B cell (primary cell): ENCODE measurements at regions of chr19 and their contacts with region 1.

Region 1: GRCh38 chr19:20039203-20039723 is at the start of gene ZNF682:
- DNase-seq: peak; percentile 96
- ATAC-seq: peak; percentile 100
- H3K4me3 ChIP-seq: peak within 1 kb of the TSS; percentile 30 to 91 (median 83)
- H3K4me3 Mint-ChIP-seq: peak within 1 kb of the TSS; percentile 99
- H3K27ac ChIP-seq: peak within 1 kb of the TSS; percentile 70 to 72
- H3K27ac Mint-ChIP-seq: peak within 1 kb of the TSS; percentile 97
- H3K4me1 ChIP-seq: peaks cover 0 to 9% of the 10 kb centered on the region in 2 donors
- H3K4me1 Mint-ChIP-seq: peaks cover 15% of the 10 kb centered on the region
- H3K27me3 ChIP-seq: peaks cover 0 to 5% (median 0%) of the 10 kb centered on the region in 4 experiments
- H3K27me3 Mint-ChIP-seq: no peaks in the 10 kb centered on the region
- CTCF ChIP-seq: no peak
- total RNA-seq, gene ZNF682: 11.3 and 16.0 TPM in 2 replicates

Region 2: GRCh38 chr19:19865739-19866481 is 173.4 kb before region 1 on chr19 and contains the start of gene ZNF253:
- CTCF ChIA-PET with region 1: interaction called, 3 read pairs
- POLR2A ChIA-PET with region 1: no interaction called
- intact Hi-C with region 1: loop called (anchors 10 kb)
- DNase-seq: peak; percentile 94
- ATAC-seq: peak; percentile 87
- H3K4me3 ChIP-seq: peak within 1 kb of the TSS; percentile 78 to 97 (median 93)
- H3K4me3 Mint-ChIP-seq: peak within 1 kb of the TSS; percentile 100
- H3K27ac ChIP-seq: peak within 1 kb of the TSS; percentile 88 to 91
- H3K27ac Mint-ChIP-seq: peak within 1 kb of the TSS; percentile 98
- H3K4me1 ChIP-seq: peaks cover 15 to 19% of the 10 kb centered on the region in 2 donors
- H3K4me1 Mint-ChIP-seq: peaks cover 35% of the 10 kb centered on the region
- H3K27me3 ChIP-seq: no peaks in the 10 kb centered on the region
- H3K27me3 Mint-ChIP-seq: no peaks in the 10 kb centered on the region
- CTCF ChIP-seq: no peak
- total RNA-seq, gene ZNF253: 28.6 and 33.7 TPM in 2 replicates

Region 3: DNA sequence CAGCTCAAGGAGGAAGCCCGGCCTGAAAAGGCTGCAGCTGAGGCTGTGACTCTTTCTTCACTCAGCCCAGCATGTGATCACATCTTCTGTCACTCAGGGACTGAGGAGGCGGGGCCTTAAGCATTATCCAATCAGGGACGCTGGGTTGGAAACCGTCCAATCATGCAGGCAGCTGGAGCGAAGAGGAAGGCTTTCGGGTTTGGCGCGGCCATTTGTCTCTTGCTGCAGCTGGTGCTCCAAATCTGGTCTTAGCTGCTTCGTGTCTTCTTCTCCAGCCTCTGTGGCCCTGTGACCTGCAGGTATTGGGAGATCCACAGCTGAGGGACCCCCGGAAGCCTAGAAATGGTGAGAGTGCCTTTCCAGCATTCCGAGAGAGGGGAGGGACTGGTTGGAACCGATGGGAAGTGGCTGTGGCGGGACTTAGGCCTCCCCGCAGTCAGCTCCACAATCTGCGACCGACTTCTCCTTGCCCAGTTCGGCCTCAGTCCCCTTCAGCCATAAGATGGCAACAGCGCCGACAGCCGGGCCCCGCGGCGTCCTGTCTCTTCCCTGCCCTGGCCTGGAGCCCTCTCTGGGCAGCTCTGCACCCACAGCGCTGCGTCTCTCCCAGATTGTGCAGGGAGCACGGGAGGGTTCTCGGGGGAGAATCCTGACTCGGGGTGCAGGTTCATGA is 38.7 kb after region 1 on chr19 and contains the start of gene ZNF90:
- CTCF ChIA-PET with region 1: no interaction called
- POLR2A ChIA-PET with region 1: no interaction called
- intact Hi-C with region 1: loop called (anchors 1 kb)
- DNase-seq: peak; percentile 93
- ATAC-seq: peak; percentile 99
- H3K4me3 ChIP-seq: peak within 1 kb of the TSS; percentile 60 to 78 (median 68)
- H3K4me3 Mint-ChIP-seq: peak within 1 kb of the TSS; percentile 95
- H3K27ac ChIP-seq: peak within 1 kb of the TSS in 1 of 2 donors; percentile 9
- H3K27ac Mint-ChIP-seq: peak within 1 kb of the TSS; percentile 79
- H3K4me1 ChIP-seq: peaks cover 10 to 14% of the 10 kb centered on the region in 2 donors
- H3K4me1 Mint-ChIP-seq: peaks cover 25% of the 10 kb centered on the region
- H3K27me3 ChIP-seq: no peaks in the 10 kb centered on the region
- H3K27me3 Mint-ChIP-seq: no peaks in the 10 kb centered on the region
- CTCF ChIP-seq: no peak
- total RNA-seq, gene ZNF90: 14.6 and 15.8 TPM in 2 replicates

Region 4: DNA sequence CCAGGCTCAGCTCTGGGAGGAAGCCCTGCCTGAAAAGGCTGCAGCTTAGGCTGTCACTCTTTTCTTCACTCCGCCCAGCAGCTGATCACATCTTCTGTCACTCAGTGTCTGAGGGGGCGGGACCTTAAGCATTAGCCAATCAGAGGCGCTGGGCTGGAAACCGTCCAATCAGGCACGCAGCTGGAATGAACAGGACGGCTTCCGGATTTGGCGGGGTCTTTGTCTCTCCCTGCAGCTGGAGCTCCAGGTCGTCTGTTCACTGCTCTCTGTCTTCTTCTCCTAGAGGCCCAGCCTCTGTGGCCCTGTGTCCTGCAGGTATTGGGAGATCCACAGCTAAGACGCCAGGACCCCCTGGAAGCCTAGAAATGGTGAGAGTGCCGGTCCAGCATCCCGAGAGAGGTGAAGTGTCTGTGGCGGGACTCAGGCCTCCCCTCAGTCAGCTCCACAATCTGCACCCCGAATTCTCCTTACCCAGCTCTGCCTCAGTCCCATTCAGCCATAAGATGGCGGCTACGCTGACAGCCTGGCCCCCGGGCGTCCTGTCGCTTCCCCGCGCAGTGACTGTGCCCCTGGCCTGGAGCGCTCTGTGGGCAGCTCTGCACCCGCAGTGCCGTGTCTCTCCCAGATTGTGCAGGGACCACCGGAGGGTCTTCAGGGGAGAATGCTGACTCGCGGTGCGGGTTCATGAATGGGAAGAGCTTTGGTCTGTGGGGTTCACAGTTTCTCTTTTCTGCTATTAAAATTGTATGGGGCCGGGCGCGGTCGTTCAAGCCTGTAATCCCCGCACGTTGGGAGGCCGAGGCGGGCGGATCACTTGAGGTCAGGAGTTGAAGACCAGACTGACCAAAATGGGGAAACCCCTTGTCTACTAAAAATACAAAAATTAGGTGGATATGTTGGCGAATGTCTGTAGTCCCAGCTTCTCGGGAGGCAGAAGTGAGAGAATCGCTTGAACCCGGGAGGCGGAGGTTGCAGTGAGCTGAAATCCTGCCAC is 737.1 kb after region 1 on chr19 and contains the start of gene ZNF66:
- CTCF ChIA-PET with region 1: no interaction called
- POLR2A ChIA-PET with region 1: interaction called, 10 read pairs
- intact Hi-C with region 1: no loop called
- DNase-seq: peak; percentile 95
- ATAC-seq: peak; percentile 98
- H3K4me3 ChIP-seq: peak within 1 kb of the TSS; percentile 74 to 91 (median 80)
- H3K4me3 Mint-ChIP-seq: peak within 1 kb of the TSS; percentile 97
- H3K27ac ChIP-seq: peak within 1 kb of the TSS; percentile 66 to 90
- H3K27ac Mint-ChIP-seq: peak within 1 kb of the TSS; percentile 91
- H3K4me1 ChIP-seq: peaks cover 0 to 5% of the 10 kb centered on the region in 2 donors
- H3K4me1 Mint-ChIP-seq: peaks cover 29% of the 10 kb centered on the region
- H3K27me3 ChIP-seq: no peaks in the 10 kb centered on the region
- H3K27me3 Mint-ChIP-seq: no peaks in the 10 kb centered on the region
- CTCF ChIP-seq: no peak
- total RNA-seq, gene ZNF66: 25.0 and 27.7 TPM in 2 replicates